ENCODE measurements at regions of chr9 and their contacts with region 1.

Region 1: GRCh38 chr9:3906432-3907213 is 380.8 kb upstream of the RFX3 start:
- DNase-seq: no peak
- ATAC-seq: no peak

Region 2: GRCh38 chr9:3922846-3923245 is 16.2 kb after region 1 on chr9:
- intact Hi-C with region 1: loop called (anchors 1 kb)
- DNase-seq: no peak
- ATAC-seq: peak; percentile 50

Measured in Right ventricle myocardium inferior (tissue), 1 donor.